ENCODE measurements at regions of chr3 and their contacts with region 1.

Region 1: GRCh38 chr3:14178247-14179113 is at the starts of genes LSM3 and XPC:
- DNase-seq: peak; percentile 98
- ATAC-seq: peak; percentile 96
- H3K4me3 ChIP-seq: peak within 1 kb of the TSS; percentile 84 to 97
- H3K27ac ChIP-seq: peak within 1 kb of the TSS; percentile 86
- H3K4me1 ChIP-seq: peaks cover 10 to 14% of the 10 kb centered on the region in 2 experiments; a peak in 3 of 4 replicates
- H3K27me3 ChIP-seq: no peaks in the 10 kb centered on the region
- CTCF ChIP-seq: no peak
- POLR2A ChIP-seq: peak; percentile 58
- RAD21 ChIP-seq: no peak
- total RNA-seq, gene LSM3: 17.4 TPM
- total RNA-seq, gene XPC: 29.5 TPM

Region 2: GRCh38 chr3:14124615-14125190 is 53.8 kb before region 1 on chr3 and contains the starts of genes CHCHD4 and TMEM43:
- CTCF ChIA-PET with region 1: interaction called, 3 read pairs
- POLR2A ChIA-PET with region 1: interaction called, 18 read pairs
- RAD21 ChIA-PET with region 1: interaction called, 3 read pairs
- intact Hi-C with region 1: loop called (anchors 5 kb)
- DNase-seq: peak; percentile 97
- ATAC-seq: peak; percentile 90
- H3K4me3 ChIP-seq: peak within 1 kb of the TSS; percentile 98 to 99
- H3K27ac ChIP-seq: peak within 1 kb of the TSS; percentile 87
- H3K4me1 ChIP-seq: peaks cover 8 to 20% of the 10 kb centered on the region in 2 experiments; a peak in 3 of 4 replicates
- H3K27me3 ChIP-seq: no peaks in the 10 kb centered on the region
- CTCF ChIP-seq: no peak
- POLR2A ChIP-seq: peak; percentile 14
- RAD21 ChIP-seq: no peak
- total RNA-seq, gene CHCHD4: 24.6 TPM
- total RNA-seq, gene TMEM43: 32.4 TPM

Measured in HCT116 (cell line).